Astrocyte of the cerebellum (primary cell): ENCODE measurements at regions of chr4 and their contacts with region 1.

Region 1: DNA sequence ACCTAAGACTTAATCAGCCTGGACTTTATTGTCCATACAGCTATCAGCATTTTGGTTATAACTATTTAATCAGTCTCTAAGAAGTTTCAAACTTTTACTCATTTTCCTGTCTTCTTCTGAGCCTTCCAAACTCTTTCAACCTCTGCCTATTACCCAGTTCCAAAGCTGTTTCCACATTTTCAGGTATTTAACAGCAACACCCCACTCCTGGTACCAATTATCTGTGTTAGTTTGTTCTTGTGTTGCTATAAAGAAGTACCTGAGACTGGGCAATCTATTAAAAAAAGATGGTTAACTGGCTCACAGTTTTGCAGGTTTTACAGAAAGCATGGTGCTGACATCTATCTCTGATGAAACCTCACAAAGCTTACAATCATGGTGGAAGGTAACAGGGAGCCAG is 195.6 kb downstream of the NPNT start:
- DNase-seq: no peak
- H3K4me3 ChIP-seq: no peak overlapping the region
- CTCF ChIP-seq: no peak

Region 2: DNA sequence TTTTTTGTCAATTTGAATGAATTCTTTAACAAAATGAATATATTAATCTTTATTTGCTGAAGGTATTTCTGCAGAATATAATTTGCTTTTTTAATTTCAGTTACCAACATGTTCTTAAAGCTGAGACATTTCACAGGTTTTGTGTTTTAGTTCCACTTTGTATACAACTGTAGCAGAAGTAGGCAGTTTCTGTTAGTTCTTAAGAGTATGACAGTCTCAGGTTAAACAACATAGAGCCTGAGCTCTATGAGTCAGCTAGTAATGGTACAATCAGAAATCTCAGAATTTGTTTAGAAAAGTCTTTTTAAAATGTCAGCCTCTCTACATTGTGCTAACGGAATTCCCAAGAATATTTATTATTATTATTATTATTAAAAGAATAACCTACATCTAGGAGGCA is 331.9 kb before region 1 on chr4:
- in situ Hi-C with region 1: no loop called
- DNase-seq: no peak
- H3K4me3 ChIP-seq: no peak overlapping the region
- CTCF ChIP-seq: no peak

Region 3: GRCh38 chr4:106019771-106020170 is 71.1 kb before region 1 on chr4:
- in situ Hi-C with region 1: loop called (anchors 5 kb)
- DNase-seq: no peak
- H3K4me3 ChIP-seq: no peak overlapping the region
- CTCF ChIP-seq: no peak

Region 4: DNA sequence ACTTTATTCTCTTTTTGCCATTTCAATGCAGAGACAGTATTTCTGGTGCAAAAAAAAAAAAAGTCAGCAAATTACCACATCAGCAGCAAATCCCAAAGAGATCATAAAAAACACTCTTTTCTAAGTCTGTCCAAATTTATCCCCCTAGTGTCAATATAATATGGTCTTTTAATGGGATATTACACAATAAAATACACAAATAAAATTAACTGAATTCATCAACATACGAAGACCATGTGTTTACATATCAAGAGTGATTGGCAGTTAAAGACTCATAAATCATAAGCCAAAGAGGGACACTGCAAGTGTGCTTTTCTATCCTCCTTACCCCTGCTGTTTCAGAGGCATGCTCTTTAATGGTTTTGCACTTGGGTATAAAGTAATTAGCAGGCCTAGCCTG is 1285.5 kb after region 1 on chr4:
- in situ Hi-C with region 1: no loop called
- DNase-seq: no peak
- H3K4me3 ChIP-seq: no peak overlapping the region
- CTCF ChIP-seq: no peak